ENCODE measurements at regions of chr1 and their contacts with region 1.

Region 1: GRCh38 chr1:66048011-66048410 is 255.3 kb downstream of the PDE4B start:
- DNase-seq: no peak
- H3K4me3 ChIP-seq: peak overlapping the region in 1 of 59 donors; percentile 6
- H3K27ac ChIP-seq: peak overlapping the region in 40 of 59 donors; percentile 4 to 94 (median 60)
- H3K27me3 ChIP-seq: no peaks in the 10 kb centered on the region
- CTCF ChIP-seq: no peak

Region 2: DNA sequence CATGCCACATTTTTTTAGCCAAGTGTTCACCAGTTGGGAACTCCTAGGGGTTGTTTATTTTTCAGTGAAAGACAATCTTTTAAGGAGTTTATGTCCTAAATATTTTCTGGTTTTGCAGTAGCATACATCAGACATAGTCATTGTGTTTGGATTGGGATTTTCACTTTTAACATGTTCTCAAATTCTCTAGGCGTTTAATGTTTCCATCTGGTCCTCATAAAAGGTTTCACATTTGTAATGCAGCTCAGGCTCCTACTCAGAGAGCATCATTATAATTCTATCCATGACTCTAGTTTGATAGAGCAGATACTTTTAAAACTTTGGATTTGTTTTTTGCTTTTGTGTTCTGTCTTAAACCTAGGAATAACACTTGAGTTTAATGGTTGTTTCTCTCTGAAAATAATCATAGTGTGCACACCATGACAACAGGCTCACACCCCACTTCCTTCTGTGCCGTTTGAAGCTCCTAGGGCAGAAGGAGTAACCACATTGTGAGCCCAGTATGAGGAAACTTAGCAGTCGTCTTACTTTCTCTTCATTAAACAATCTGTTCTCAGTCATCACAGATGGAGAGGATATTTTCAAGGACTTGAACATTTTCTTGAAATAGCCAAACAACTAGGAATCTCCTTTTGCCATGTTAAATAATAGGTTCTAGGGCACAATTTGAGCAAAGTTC is 35.8 kb before region 1 on chr1:
- intact Hi-C with region 1: loop called in 1 of 2 experiments (anchors 2 kb)
- DNase-seq: no peak
- H3K4me3 ChIP-seq: peak overlapping the region in 9 of 59 donors; percentile 1 to 27 (median 8)
- H3K27ac ChIP-seq: peak overlapping the region in 56 of 59 donors; percentile 1 to 84 (median 58)
- H3K27me3 ChIP-seq: no peaks in the 10 kb centered on the region
- CTCF ChIP-seq: no peak